Calu3 (cell line): ENCODE measurements at regions of chr17 and their contacts with region 1.

Region 1: DNA sequence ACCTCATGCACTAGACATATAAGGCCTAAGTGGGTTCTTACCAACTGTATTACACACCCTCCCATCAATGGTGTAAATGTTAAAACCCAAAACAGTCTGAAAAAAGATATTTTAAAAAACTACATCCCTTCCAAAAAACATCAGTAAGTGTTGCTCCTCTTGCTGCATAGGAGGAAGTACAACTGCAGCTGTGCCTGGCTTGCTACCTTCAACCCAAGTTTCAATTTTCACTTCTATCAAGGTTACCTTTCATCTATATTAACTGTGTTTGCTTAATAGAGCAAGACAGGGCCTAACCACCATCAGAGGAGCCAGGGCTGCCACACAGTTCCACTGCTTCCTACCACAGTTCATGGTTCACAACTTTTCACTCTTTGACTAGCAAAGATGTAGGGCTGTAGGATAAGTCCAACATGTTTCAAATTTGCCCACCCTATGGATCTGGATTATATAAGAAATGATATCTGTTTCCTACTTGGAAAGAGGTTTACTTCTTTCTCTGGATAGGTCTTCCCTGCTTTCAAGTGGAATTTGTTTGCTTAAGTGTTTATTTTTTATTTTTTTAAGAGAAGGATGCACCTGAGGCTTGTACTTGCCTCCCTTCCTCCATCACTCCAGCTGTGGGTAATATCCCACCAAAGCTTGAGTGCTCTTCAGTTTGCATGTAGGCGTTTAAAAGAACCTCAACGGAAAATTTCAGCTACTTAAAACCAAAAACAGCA is 56.7 kb downstream of the GRB7 start:
- DNase-seq: peak; percentile 73
- H3K4me3 Mint-ChIP-seq: no peak overlapping the region
- H3K27ac Mint-ChIP-seq: no peak overlapping the region
- H3K4me1 Mint-ChIP-seq: no peaks in the 10 kb centered on the region
- H3K27me3 Mint-ChIP-seq: no peaks in the 10 kb centered on the region
- CTCF ChIP-seq: no peak

Region 2: DNA sequence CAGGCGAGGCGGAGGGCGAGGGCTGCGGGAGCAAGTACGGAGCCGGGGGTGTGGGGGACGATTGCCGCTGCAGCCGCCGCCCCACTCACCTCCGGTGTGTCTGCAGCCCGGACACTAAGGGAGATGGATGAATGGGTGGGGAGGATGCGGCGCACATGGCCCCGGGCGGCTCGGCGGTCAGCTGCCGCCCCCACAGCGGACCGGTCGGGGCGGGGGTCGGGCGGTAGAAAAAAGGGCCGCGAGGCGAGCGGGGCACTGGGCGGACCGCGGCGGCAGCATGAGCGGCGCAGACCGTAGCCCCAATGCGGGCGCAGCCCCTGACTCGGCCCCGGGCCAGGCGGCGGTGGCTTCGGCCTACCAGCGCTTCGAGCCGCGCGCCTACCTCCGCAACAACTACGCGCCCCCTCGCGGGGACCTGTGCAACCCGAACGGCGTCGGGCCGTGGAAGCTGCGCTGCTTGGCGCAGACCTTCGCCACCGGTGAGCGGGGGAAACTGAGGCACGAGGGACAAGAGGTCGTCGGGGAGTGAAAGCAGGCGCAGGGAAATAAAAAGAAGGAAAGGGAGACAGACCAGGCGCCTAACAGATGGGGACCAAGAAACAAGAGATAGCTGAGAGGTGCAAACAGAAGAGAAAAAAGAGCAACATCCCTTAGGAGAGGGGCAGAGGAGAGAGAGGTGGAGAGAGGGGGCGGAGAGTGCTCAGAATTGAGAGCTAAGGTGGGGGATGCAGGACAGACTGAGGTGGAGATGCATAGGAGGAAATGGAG is 126.0 kb before region 1 on chr17 and contains the start of gene PNMT:
- CTCF ChIA-PET with region 1: interaction called, 90 read pairs
- intact Hi-C with region 1: no loop called
- DNase-seq: peak; percentile 100
- H3K4me3 Mint-ChIP-seq: peak within 1 kb of the TSS; percentile 24
- H3K27ac Mint-ChIP-seq: peak within 1 kb of the TSS; percentile 0
- H3K4me1 Mint-ChIP-seq: peaks cover 65% of the 10 kb centered on the region
- H3K27me3 Mint-ChIP-seq: peaks cover 69% of the 10 kb centered on the region
- CTCF ChIP-seq: no peak
- total RNA-seq, gene PNMT: 1.3 and 3.2 TPM in 2 replicates

Region 3: GRCh38 chr17:39730095-39730921 is 64.1 kb before region 1 on chr17 and contains the start of gene MIEN1:
- CTCF ChIA-PET with region 1: interaction called, 25 read pairs
- intact Hi-C with region 1: no loop called
- DNase-seq: no peak
- H3K4me3 Mint-ChIP-seq: peak within 1 kb of the TSS; percentile 79
- H3K27ac Mint-ChIP-seq: peak within 1 kb of the TSS; percentile 90
- H3K4me1 Mint-ChIP-seq: peaks cover 34% of the 10 kb centered on the region
- H3K27me3 Mint-ChIP-seq: no peaks in the 10 kb centered on the region
- CTCF ChIP-seq: no peak
- total RNA-seq, gene MIEN1: 2,121 and 2,217 TPM in 2 replicates

Region 4: DNA sequence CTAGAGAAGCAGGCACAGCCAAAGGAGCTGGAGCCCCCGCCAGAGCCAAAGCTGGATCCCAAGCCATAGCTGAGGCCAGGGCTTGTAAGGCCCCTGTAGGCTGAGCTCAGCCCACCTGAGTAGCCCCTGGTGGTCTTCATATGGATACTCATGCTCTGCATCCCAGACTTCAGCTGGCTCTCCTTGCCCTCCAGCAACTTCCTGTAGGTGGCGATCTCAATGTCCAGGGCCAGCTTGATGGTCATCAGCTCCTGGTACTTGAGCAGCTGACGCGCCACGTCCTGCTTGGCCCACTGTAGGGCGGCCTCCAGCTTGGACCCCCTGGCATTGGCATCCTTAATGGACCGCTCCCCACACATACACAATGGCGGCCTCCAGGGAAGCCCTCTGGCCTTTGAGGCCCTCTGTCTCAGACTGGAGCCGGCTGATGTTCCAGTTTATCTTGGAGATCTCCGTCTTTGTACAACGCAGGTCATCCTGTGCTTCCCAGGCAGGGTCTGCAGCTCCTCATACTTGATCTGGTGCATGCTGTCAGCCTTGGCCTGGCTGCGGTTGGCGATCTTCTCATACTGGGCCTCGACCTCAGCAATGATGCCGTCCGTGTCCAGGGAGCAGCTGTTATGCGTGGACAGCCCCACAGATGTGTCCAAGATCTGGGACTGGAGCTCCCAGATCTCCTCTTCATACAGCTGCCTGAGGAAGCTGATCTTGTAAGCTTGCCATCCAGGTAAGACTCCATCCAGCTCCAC is 40.8 kb after region 1 on chr17:
- CTCF ChIA-PET with region 1: interaction called, 1,210 read pairs
- intact Hi-C with region 1: no loop called
- DNase-seq: peak; percentile 79
- H3K4me3 Mint-ChIP-seq: no peak overlapping the region
- H3K27ac Mint-ChIP-seq: no peak overlapping the region
- H3K4me1 Mint-ChIP-seq: no peaks in the 10 kb centered on the region
- H3K27me3 Mint-ChIP-seq: no peaks in the 10 kb centered on the region
- CTCF ChIP-seq: no peak

Region 5: DNA sequence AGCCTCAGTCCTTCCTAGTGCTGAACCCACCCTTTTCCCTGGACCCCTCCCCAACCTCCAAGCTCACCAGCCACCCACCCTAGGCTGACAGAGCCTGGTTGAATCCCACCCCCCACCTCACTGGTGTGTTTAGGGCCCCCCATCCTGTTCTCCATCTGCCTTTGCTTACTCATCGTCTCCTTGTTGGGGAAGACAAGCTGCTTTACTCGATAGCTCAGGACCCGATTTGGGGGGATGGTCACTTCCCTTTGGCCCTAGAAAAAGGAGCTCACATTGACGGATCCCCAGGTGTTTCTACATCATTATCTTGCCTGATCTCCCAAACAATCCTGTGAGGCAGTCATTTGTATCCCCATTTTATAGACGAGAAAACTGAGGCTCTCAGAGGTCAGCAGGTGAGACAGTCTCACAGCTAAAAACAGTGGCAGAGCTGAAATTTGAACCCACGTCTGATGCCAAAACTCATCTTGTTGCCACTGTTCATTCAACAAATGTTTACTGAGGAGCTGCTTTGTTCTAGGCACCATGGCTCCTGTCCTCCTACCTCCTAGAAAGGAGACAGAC is 114.5 kb after region 1 on chr17:
- CTCF ChIA-PET with region 1: interaction called, 15 read pairs
- intact Hi-C with region 1: no loop called
- DNase-seq: peak; percentile 67
- H3K4me3 Mint-ChIP-seq: no peak overlapping the region
- H3K27ac Mint-ChIP-seq: no peak overlapping the region
- H3K4me1 Mint-ChIP-seq: no peaks in the 10 kb centered on the region
- H3K27me3 Mint-ChIP-seq: no peaks in the 10 kb centered on the region
- CTCF ChIP-seq: no peak

Region 6: GRCh38 chr17:39963829-39964228 is 169.4 kb after region 1 on chr17:
- CTCF ChIA-PET with region 1: interaction called, 17 read pairs
- intact Hi-C with region 1: no loop called
- DNase-seq: peak; percentile 94
- H3K4me3 Mint-ChIP-seq: no peak overlapping the region
- H3K27ac Mint-ChIP-seq: peak overlapping the region; percentile 0
- H3K4me1 Mint-ChIP-seq: peaks cover 45% of the 10 kb centered on the region
- H3K27me3 Mint-ChIP-seq: peaks cover 32% of the 10 kb centered on the region
- CTCF ChIP-seq: no peak

Region 7: GRCh38 chr17:40331743-40332641 is 537.6 kb after region 1 on chr17:
- CTCF ChIA-PET with region 1: no interaction called
- intact Hi-C with region 1: no loop called
- DNase-seq: peak; percentile 87
- H3K4me3 Mint-ChIP-seq: peak overlapping the region; percentile 15
- H3K27ac Mint-ChIP-seq: peak overlapping the region; percentile 3
- H3K4me1 Mint-ChIP-seq: peaks cover 71% of the 10 kb centered on the region
- H3K27me3 Mint-ChIP-seq: no peaks in the 10 kb centered on the region
- CTCF ChIP-seq: peak; percentile 47